Panc1 (cell line): ENCODE measurements at regions of chrX and their contacts with region 1.

Region 1: DNA sequence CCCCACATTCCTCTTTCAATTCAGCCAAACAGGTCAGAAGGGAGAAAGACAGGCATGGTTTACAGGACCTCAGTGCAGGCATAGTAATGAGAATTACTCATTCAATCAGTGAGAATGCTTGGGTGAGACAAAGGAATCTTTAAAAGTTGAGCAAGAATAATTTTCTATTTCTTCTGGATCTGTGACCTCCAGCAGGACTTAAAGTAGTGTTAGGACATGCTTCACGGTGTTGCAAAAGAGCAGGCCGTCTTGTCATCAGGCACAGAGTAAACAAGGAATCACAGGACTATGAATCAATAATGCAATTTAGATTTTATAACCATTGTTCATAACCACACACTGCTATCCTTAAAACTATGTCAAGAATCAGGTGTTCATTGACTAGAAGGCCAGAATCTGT is 130.6 kb upstream of the GLRA2 start:
- DNase-seq: no peak
- ATAC-seq: no peak
- H3K4me3 ChIP-seq: no peak overlapping the region
- H3K27ac ChIP-seq: no peak overlapping the region
- H3K4me1 ChIP-seq: no peaks in the 10 kb centered on the region
- H3K27me3 ChIP-seq: no peaks in the 10 kb centered on the region
- CTCF ChIP-seq: no peak

Region 2: DNA sequence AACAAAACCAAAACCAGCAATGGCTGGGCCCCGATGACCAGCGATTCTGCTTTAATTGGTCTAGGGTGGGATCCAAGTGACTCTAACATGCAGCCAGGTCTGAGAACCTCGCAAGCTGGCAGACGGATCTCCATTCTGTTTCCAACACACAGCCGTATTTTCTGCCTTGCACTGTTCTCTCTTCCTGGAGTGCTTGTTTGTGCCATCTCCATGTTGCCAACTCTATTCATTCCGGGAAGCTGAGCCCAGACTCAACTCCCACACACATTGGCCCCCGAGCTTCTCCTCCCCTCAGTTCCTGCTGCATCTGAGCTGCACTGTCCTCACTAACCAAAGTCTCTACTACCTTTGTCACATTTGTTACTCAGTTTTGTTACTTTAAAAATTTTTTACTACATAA is 404.6 kb before region 1 on chrX:
- CTCF ChIA-PET with region 1: no interaction called
- POLR2A ChIA-PET with region 1: no interaction called
- in situ Hi-C with region 1: no loop called
- intact Hi-C with region 1: no loop called
- DNase-seq: no peak
- ATAC-seq: no peak
- H3K4me3 ChIP-seq: no peak overlapping the region
- H3K27ac ChIP-seq: no peak overlapping the region
- H3K4me1 ChIP-seq: no peaks in the 10 kb centered on the region
- H3K27me3 ChIP-seq: no peaks in the 10 kb centered on the region
- CTCF ChIP-seq: no peak

Region 3: DNA sequence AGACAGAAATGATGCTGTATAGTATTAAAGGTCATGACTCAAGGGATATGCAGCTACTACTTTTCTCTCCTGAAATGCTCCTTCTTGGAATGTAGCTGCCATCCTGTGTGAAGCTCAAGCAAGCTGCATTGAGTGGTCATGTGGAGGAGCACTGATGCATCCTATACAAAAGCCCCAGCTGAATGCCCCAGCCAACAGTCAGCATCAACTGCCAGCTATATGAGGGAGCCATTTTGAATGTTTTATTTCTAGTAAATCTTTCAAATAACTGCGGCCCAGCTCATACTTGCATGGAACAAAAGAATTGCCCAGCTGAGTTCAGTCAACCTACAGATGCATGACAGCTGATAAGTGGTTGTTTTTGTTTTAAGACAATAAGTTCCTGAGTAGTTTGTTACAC is 204.0 kb before region 1 on chrX:
- CTCF ChIA-PET with region 1: no interaction called
- POLR2A ChIA-PET with region 1: no interaction called
- in situ Hi-C with region 1: no loop called
- intact Hi-C with region 1: no loop called
- DNase-seq: no peak
- ATAC-seq: no peak
- H3K4me3 ChIP-seq: no peak overlapping the region
- H3K27ac ChIP-seq: no peak overlapping the region
- H3K4me1 ChIP-seq: no peaks in the 10 kb centered on the region
- H3K27me3 ChIP-seq: no peaks in the 10 kb centered on the region
- CTCF ChIP-seq: no peak

Region 4: GRCh38 chrX:14291666-14292500 is 106.8 kb before region 1 on chrX:
- CTCF ChIA-PET with region 1: no interaction called
- POLR2A ChIA-PET with region 1: no interaction called
- in situ Hi-C with region 1: no loop called
- intact Hi-C with region 1: no loop called
- DNase-seq: no peak
- ATAC-seq: no peak
- H3K4me3 ChIP-seq: no peak overlapping the region
- H3K27ac ChIP-seq: no peak overlapping the region
- H3K4me1 ChIP-seq: no peaks in the 10 kb centered on the region
- H3K27me3 ChIP-seq: no peaks in the 10 kb centered on the region
- CTCF ChIP-seq: no peak

Region 5: GRCh38 chrX:14660970-14661369 is 262.2 kb after region 1 on chrX:
- CTCF ChIA-PET with region 1: no interaction called
- POLR2A ChIA-PET with region 1: interaction called, 12 read pairs
- in situ Hi-C with region 1: no loop called
- intact Hi-C with region 1: no loop called
- DNase-seq: no peak
- ATAC-seq: no peak
- H3K4me3 ChIP-seq: no peak overlapping the region
- H3K27ac ChIP-seq: no peak overlapping the region
- H3K4me1 ChIP-seq: no peaks in the 10 kb centered on the region
- H3K27me3 ChIP-seq: no peaks in the 10 kb centered on the region
- CTCF ChIP-seq: no peak

Region 6: DNA sequence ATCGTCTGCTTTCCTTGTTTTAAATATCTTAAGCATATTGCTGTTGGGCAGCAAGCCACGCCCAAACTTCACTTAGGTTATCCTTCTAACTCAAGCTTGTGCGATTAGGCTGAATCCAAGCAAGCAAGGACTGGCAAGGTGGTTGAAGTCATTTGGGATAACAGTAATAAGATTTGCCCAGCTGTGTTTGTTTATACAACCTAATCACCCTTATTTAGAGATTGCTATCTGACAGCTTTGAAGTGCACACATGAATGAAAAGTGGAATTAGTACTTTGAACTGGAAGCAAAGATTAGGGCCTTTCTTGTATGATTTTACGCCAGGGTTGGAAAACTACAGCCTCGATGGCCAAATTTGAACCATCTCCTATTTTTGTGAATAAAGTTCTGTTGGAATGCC is 689.0 kb after region 1 on chrX:
- CTCF ChIA-PET with region 1: no interaction called
- POLR2A ChIA-PET with region 1: no interaction called
- in situ Hi-C with region 1: no loop called
- intact Hi-C with region 1: no loop called
- DNase-seq: no peak
- ATAC-seq: no peak
- H3K4me3 ChIP-seq: no peak overlapping the region
- H3K27ac ChIP-seq: no peak overlapping the region
- H3K4me1 ChIP-seq: no peaks in the 10 kb centered on the region
- H3K27me3 ChIP-seq: no peaks in the 10 kb centered on the region
- CTCF ChIP-seq: no peak